ENCODE measurements at regions of chr16 and their contacts with region 1.

Region 1: GRCh38 chr16:53054670-53055485 is at the start of gene CHD9:
- DNase-seq: peak; percentile 56
- ATAC-seq: peak; percentile 81
- H3K4me3 ChIP-seq: peak within 1 kb of the TSS; percentile 94
- H3K27ac ChIP-seq: peak within 1 kb of the TSS; percentile 74
- H3K4me1 ChIP-seq: peaks cover 22% of the 10 kb centered on the region
- H3K27me3 ChIP-seq: no peaks in the 10 kb centered on the region
- CTCF ChIP-seq: peak; percentile 97 to 99 (median 98)
- EP300 ChIP-seq: 0 out of 4 replicates have a peak, but pooled peaks of 1 of the 2 experiments have one; percentile 23
- POLR2A ChIP-seq: peak; percentile 70
- RAD21 ChIP-seq: peak; percentile 97
- polyA plus RNA-seq, gene CHD9: 70.5 to 95.7 TPM

Region 2: GRCh38 chr16:53099318-53100130 is 44.6 kb after region 1 on chr16:
- CTCF ChIA-PET with region 1: interaction called, 17 read pairs
- POLR2A ChIA-PET with region 1: interaction called, 142 read pairs
- RAD21 ChIA-PET with region 1: interaction called, 107 read pairs
- SMC1A ChIA-PET with region 1: interaction called, 270 read pairs
- in situ Hi-C with region 1: loop called (anchors 5 kb)
- intact Hi-C with region 1: no loop called
- DNase-seq: peak; percentile 68
- ATAC-seq: peak; percentile 75
- H3K4me3 ChIP-seq: peak overlapping the region; percentile 79
- H3K27ac ChIP-seq: peak overlapping the region; percentile 96
- H3K4me1 ChIP-seq: peaks cover 25% of the 10 kb centered on the region
- H3K27me3 ChIP-seq: no peaks in the 10 kb centered on the region
- CTCF ChIP-seq: no peak
- EP300 ChIP-seq: peak; percentile 7 to 55; a peak in 1 of 4 replicates
- POLR2A ChIP-seq: peak; percentile 50
- RAD21 ChIP-seq: no peak

Region 3: GRCh38 chr16:53130159-53131049 is 75.5 kb after region 1 on chr16:
- CTCF ChIA-PET with region 1: interaction called, 30 read pairs
- POLR2A ChIA-PET with region 1: interaction called, 13 read pairs
- RAD21 ChIA-PET with region 1: interaction called, 32 read pairs
- SMC1A ChIA-PET with region 1: interaction called, 17 read pairs
- in situ Hi-C with region 1: no loop called
- intact Hi-C with region 1: loop called (anchors 1 kb)
- DNase-seq: peak; percentile 68
- ATAC-seq: peak; percentile 91
- H3K4me3 ChIP-seq: peak overlapping the region; percentile 67
- H3K27ac ChIP-seq: peak overlapping the region; percentile 79
- H3K4me1 ChIP-seq: peaks cover 20% of the 10 kb centered on the region
- H3K27me3 ChIP-seq: no peaks in the 10 kb centered on the region
- CTCF ChIP-seq: peak; percentile 47 to 81 (median 58); a peak in 5 of 6 replicates
- EP300 ChIP-seq: no peak; a peak in 1 of 4 replicates
- POLR2A ChIP-seq: peak; percentile 81
- RAD21 ChIP-seq: peak; percentile 73

Region 4: DNA sequence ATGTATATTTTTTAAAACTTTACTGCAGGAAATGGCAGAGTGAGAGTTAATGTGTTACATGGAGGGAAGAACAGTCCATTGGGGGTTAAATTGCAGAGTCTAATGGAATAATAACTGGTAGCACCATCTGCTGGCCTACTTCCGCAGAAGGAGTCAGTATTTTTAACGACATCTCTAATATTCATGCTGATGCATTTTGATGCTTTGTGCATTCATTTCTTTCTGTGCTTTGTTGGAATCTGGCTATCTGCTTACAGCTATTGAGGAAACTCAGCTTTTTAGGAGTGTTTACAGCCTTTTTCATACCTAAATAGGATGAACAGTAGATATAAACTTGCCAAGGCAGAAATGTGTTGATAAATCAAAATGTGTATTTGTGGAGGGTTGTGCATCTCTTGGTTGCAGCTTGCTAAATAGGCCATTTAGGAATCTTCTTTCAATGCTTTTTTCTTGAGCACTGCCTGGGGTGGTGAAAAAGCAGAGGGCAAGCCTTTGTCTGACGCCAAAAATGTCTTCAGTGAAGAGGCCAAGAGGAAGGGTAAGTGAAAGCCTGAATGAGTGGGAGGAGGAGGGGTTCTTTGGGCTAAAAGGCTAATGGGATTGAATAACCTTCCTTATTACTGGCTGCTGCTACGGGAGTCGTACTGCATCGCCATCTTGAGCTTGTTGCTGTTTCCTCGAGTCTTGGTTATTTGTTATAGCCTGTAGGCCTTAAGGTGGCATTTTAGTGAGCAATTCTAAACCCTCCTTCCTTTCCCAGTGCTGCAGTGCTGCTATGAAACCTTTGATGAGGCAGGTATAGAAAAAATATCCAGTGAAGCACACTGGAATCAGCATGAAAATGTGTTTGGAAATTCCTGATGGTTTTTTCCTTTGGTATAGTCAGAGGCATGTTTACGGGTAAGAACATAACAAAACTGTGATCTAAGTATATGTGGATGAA is 153.2 kb after region 1 on chr16:
- CTCF ChIA-PET with region 1: interaction called, 70 read pairs
- POLR2A ChIA-PET with region 1: interaction called, 8 read pairs
- RAD21 ChIA-PET with region 1: interaction called, 77 read pairs
- SMC1A ChIA-PET with region 1: interaction called, 88 read pairs
- in situ Hi-C with region 1: no loop called
- intact Hi-C with region 1: loop called (anchors 1 kb)
- DNase-seq: peak; percentile 69
- ATAC-seq: peak; percentile 83
- H3K4me3 ChIP-seq: peak overlapping the region; percentile 72
- H3K27ac ChIP-seq: peak overlapping the region; percentile 95
- H3K4me1 ChIP-seq: peaks cover 3% of the 10 kb centered on the region; the same call in 1 of the 2 replicates
- H3K27me3 ChIP-seq: no peaks in the 10 kb centered on the region
- CTCF ChIP-seq: peak; percentile 51 to 63 (median 55)
- EP300 ChIP-seq: no peak
- POLR2A ChIP-seq: peak; percentile 57; the same call in 1 of the 2 replicates
- RAD21 ChIP-seq: peak; percentile 58

Region 5: GRCh38 chr16:53282975-53283946 is 228.4 kb after region 1 on chr16:
- CTCF ChIA-PET with region 1: interaction called, 12 read pairs
- POLR2A ChIA-PET with region 1: no interaction called
- RAD21 ChIA-PET with region 1: interaction called, 4 read pairs
- SMC1A ChIA-PET with region 1: interaction called, 11 read pairs
- in situ Hi-C with region 1: no loop called
- intact Hi-C with region 1: loop called (anchors 10 kb)
- DNase-seq: peak; percentile 3
- ATAC-seq: no peak
- H3K4me3 ChIP-seq: no peak overlapping the region
- H3K27ac ChIP-seq: no peak overlapping the region
- H3K4me1 ChIP-seq: no peaks in the 10 kb centered on the region
- H3K27me3 ChIP-seq: no peaks in the 10 kb centered on the region
- CTCF ChIP-seq: peak; percentile 34 to 60 (median 38); a peak in 4 of 6 replicates
- EP300 ChIP-seq: no peak
- POLR2A ChIP-seq: no peak
- RAD21 ChIP-seq: peak; percentile 37; the same call in 1 of the 2 replicates